IMR-90 (cell line): ENCODE measurements at regions of chr1 and their contacts with region 1.

Region 1: DNA sequence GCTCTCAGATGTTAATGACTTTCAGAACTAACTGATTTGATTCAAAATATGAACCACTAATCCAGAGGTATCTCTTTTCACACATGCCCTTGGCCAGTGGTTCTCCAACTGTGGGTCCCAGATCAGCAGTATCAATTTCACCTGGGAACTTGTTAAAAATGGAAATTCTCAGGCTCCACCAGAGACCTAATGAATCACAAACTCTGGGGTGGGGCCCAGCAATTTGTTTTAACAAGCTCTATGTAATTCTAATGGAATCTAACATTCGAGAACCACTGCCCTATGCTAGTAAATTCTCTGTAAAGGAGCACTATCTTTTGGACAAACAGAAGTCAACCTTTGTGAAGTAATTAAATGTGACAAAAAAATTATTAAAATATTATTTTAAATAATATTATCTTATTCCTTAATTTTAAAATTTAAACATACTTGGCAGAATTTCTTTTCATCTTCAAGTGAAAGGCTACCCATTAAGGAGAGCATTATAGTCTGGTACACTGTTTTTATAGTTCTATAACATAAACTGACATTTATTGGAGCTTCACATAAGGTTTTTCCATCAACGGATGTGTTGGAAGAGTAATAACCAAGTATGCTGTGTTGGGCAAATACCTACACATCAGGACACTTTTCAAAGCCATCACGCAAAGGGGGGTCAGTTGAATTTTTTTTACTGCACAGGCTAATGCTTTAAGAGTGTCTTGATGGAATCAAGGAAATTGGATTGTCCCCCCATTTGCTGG is 130.4 kb downstream of the LHX4 start:
- DNase-seq: peak; percentile 72
- ATAC-seq: peak; percentile 84
- H3K4me3 ChIP-seq: no peak overlapping the region
- H3K27ac ChIP-seq: no peak overlapping the region
- H3K4me1 ChIP-seq: peaks cover 4% of the 10 kb centered on the region; the same call in 1 of the 2 replicates
- H3K27me3 ChIP-seq: no peaks in the 10 kb centered on the region
- CTCF ChIP-seq: no peak
- POLR2A ChIP-seq: no peak
- RAD21 ChIP-seq: no peak

Region 2: GRCh38 chr1:180327089-180327488 is 33.4 kb before region 1 on chr1:
- CTCF ChIA-PET with region 1: interaction called, 4 read pairs
- POLR2A ChIA-PET with region 1: no interaction called
- dilution Hi-C with region 1: no loop called
- in situ Hi-C with region 1: no loop called
- intact Hi-C with region 1: loop called (anchors 5 kb)
- DNase-seq: no peak
- ATAC-seq: no peak
- H3K4me3 ChIP-seq: no peak overlapping the region
- H3K27ac ChIP-seq: no peak overlapping the region
- H3K4me1 ChIP-seq: no peaks in the 10 kb centered on the region
- H3K27me3 ChIP-seq: no peaks in the 10 kb centered on the region
- CTCF ChIP-seq: no peak
- POLR2A ChIP-seq: no peak
- RAD21 ChIP-seq: no peak